AG04449 (cell line): ENCODE measurements at regions of chr15 and their contacts with region 1.

Region 1: DNA sequence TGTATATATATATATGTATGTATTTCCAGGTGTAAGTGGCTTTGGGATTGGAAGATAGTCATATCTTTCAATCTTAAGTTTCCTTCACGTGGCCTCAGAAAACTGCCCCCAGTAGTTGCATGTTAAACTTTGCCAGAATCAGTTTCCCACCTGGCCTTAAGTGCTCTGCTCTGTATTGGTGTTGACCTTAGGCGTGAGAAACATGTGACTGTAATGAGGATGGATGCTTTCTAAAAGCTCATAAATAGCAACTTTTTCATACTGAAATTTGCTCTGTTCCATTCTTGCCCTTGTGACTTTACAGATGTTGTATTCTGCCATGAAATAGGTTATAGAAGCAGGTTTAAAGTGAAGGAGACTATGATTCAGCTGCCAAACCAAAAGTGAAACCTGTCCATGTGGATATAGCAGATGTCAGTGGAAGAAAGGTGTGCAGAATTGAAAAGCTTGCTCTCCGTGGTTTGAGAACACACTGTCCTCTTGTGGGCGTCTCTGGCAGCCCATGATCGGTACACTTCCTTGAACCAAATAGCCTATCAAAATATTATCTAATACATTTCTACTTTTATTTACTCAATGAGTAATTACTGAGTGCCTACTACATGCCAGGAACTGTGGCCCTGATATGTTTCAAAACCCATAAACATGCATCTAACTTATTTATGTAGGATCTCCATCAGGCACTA is 15.8 kb downstream of the SCG5 start:
- DNase-seq: no peak
- H3K4me3 ChIP-seq: no peak overlapping the region
- CTCF ChIP-seq: no peak

Region 2: DNA sequence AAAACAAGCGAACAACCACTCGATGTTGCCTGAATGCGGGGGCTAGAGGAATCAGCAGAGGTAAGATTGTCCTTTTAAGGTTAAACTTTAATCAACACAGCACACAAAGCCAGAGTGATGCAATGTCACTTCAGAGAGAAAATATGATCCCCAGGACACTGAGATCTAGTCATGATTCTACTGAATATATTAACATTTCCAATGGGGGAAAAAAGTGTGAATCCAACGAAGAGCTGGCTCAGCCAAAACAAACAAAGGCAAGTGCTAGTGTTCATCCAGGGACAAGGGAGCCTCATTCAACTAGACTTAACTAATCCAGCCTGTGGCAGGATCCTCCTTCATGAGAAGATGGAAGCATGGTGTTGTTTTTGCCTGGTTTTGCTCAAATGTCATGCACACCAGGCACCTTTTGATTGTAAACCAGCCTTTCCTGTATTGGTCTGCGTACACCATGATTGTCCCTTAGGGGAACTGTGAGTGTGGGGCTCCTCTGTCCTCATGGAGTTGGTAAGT is 20.0 kb after region 1 on chr15:
- CTCF ChIA-PET with region 1: interaction called, 22 read pairs
- POLR2A ChIA-PET with region 1: interaction called, 3 read pairs
- DNase-seq: no peak
- H3K4me3 ChIP-seq: no peak overlapping the region
- CTCF ChIP-seq: no peak

Region 3: DNA sequence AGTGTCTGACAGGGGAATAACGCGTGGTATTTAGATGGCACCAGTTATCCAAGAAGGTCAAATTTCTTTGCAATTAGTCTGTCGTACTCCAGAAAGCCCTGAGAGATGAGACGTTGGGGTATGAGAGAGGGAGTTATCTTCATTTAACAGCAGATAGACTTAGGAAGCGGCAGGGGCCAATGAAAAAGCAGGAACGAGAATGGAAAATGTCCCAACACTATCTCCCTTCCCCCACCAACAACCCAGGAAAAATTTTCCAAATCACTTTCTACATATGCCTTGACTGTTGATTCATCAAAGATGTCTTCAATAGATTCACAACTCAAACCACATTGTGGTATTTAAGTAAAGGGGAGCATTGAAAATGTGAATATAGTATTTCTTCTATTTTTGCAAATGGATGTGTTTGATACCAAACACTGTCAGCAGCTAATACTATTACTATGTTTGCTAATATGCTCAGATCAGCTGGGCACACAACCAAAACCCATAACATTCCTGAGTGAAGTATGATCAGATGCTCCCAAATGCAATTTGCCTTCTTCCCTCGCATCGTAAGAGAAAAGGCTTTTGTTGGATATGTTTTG is 47.1 kb after region 1 on chr15:
- CTCF ChIA-PET with region 1: interaction called, 11 read pairs
- POLR2A ChIA-PET with region 1: no interaction called
- DNase-seq: no peak
- H3K4me3 ChIP-seq: no peak overlapping the region
- CTCF ChIP-seq: no peak

Region 4: DNA sequence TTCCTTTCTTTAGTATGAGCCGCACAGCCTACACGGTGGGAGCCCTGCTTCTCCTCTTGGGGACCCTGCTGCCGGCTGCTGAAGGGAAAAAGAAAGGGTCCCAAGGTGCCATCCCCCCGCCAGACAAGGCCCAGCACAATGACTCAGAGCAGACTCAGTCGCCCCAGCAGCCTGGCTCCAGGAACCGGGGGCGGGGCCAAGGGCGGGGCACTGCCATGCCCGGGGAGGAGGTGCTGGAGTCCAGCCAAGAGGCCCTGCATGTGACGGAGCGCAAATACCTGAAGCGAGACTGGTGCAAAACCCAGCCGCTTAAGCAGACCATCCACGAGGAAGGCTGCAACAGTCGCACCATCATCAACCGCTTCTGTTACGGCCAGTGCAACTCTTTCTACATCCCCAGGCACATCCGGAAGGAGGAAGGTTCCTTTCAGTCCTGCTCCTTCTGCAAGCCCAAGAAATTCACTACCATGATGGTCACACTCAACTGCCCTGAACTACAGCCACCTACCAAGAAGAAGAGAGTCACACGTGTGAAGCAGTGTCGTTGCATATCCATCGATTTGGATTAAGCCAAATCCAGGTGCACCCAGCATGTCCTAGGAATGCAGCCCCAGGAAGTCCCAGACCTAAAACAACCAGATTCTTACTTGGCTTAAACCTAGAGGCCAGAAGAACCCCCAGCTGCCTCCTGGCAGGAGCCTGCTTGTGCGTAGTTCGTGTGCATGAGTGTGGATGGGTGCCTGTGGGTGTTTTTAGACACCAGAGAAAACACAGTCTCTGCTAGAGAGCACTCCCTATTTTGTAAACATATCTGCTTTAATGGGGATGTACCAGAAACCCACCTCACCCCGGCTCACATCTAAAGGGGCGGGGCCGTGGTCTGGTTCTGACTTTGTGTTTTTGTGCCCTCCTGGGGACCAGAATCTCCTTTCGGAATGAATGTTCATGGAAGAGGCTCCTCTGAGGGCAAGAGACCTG is 73.6 kb after region 1 on chr15:
- CTCF ChIA-PET with region 1: interaction called, 18 read pairs
- POLR2A ChIA-PET with region 1: no interaction called
- DNase-seq: no peak
- H3K4me3 ChIP-seq: no peak overlapping the region; the same call in 1 of the 2 replicates
- CTCF ChIP-seq: no peak

Region 5: DNA sequence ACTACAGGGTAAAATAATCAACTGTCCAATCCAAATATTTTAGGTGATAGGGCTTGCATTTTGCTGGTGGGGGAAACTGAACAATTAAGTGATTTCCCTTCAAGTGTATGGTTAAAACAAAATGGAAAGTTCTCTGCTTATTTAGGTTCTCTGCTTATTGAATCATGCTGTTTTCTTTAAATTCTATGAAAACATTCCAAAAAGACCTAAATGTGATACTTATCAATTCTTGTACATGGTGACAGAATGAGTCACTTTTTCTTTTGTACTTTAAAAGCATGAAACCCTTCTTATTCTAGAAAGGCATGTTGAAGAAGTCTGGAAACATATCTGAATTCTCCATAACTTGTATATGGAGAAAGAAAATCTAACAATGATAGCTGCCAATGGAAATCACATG is 344.6 kb after region 1 on chr15:
- CTCF ChIA-PET with region 1: interaction called, 150 read pairs
- POLR2A ChIA-PET with region 1: no interaction called
- DNase-seq: no peak
- H3K4me3 ChIP-seq: no peak overlapping the region
- CTCF ChIP-seq: no peak

Region 6: DNA sequence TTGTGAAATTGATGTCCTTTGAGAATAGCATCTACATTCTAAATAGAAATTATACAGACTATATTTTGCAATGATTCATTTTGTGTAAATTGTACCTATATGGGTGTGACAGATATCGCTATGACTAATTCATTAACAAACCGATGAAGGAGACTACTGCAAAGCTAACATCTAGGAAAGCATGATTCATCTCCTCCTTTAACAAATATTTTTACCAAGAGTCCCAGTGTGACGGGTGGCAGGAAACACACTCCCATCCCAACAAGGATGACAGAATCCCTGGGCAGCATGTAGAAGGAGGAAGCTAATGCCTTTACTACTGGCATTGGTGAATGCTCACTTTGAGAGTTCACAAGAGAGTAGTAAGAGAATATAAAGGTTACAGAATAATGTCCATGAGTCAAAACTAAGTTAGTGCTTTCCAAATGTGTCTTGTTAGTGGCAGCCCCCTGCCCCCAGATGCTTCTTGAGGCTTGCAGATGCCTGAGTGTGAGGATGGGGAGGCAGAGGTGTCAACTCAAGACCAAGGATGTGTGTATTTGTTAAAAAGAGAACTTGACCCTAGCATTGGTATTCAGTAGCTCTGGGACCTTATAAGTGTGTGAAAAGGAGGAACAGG is 356.6 kb after region 1 on chr15:
- CTCF ChIA-PET with region 1: interaction called, 12 read pairs
- POLR2A ChIA-PET with region 1: no interaction called
- DNase-seq: no peak
- H3K4me3 ChIP-seq: no peak overlapping the region
- CTCF ChIP-seq: no peak